Activated CD8-positive, alpha-beta T cell treated with anti-CD3 and anti-CD28 coated beads, Interleukin-2, amount 10 ng/mL, durations not matched to agents 7 days and 5 days (primary cell): ENCODE measurements at regions of chr6 and their contacts with region 1.

Region 1: DNA sequence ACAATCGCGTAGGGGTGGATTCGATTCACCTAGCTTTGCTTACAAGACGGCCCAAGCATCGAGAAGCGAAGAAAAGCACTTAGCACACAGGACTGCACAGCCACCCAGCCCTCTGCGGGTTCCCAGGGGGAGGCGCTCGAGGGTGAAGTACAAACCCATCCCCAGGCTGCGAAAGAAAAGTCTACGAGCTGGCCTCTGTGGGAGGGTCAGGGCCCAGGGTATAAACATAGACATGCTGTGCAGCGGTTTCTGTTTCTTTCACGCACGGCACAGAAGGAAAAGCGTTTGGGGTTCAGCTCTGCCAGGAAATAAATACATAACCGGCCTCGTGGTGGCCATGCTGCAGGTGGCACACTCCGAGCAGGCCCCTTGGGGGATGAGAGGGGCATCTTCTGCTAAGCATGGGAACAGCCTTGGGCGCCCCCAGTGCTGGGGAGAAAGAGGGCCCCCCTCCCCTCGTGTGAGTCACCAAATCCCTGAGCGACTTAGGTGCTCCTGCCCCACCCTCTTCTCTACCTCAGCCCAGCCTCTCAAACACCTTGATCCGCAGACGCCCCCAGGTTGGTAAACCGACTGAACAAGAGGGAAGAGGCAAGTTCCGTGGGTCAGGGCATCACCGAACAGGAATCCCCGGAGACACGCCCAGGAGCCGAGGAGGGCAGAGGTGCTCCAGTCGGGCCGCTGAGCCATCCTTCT is 91.6 kb upstream of the RIPOR2 start:
- DNase-seq: peak; percentile 88
- ATAC-seq: peak; percentile 97
- H3K4me3 Mint-ChIP-seq: peak overlapping the region; percentile 65
- H3K27ac Mint-ChIP-seq: peak overlapping the region; percentile 81
- H3K4me1 Mint-ChIP-seq: peaks cover 48% of the 10 kb centered on the region
- H3K27me3 Mint-ChIP-seq: no peaks in the 10 kb centered on the region

Region 2: GRCh38 chr6:24910961-24911712 is 116.2 kb before region 1 on chr6:
- CTCF ChIA-PET with region 1: interaction called, 16 read pairs
- POLR2A ChIA-PET with region 1: no interaction called
- DNase-seq: no peak
- ATAC-seq: peak; percentile 42
- H3K4me3 Mint-ChIP-seq: peak overlapping the region; percentile 81
- H3K27ac Mint-ChIP-seq: peak overlapping the region; percentile 87
- H3K4me1 Mint-ChIP-seq: peaks cover 94% of the 10 kb centered on the region
- H3K27me3 Mint-ChIP-seq: no peaks in the 10 kb centered on the region

Region 3: GRCh38 chr6:25006565-25007001 is 20.8 kb before region 1 on chr6:
- CTCF ChIA-PET with region 1: interaction called, 87 read pairs
- POLR2A ChIA-PET with region 1: interaction called, 3 read pairs
- DNase-seq: peak; percentile 76
- ATAC-seq: peak; percentile 84
- H3K4me3 Mint-ChIP-seq: peak overlapping the region; percentile 58
- H3K27ac Mint-ChIP-seq: peak overlapping the region; percentile 92
- H3K4me1 Mint-ChIP-seq: peaks cover 82% of the 10 kb centered on the region
- H3K27me3 Mint-ChIP-seq: no peaks in the 10 kb centered on the region

Region 4: GRCh38 chr6:25042036-25042521 is 14.7 kb after region 1 on chr6:
- CTCF ChIA-PET with region 1: interaction called, 113 read pairs
- POLR2A ChIA-PET with region 1: interaction called, 15 read pairs
- DNase-seq: peak; percentile 62
- ATAC-seq: peak; percentile 72
- H3K4me3 Mint-ChIP-seq: peak overlapping the region; percentile 92
- H3K27ac Mint-ChIP-seq: peak overlapping the region; percentile 94
- H3K4me1 Mint-ChIP-seq: peaks cover 60% of the 10 kb centered on the region
- H3K27me3 Mint-ChIP-seq: peaks cover 5% of the 10 kb centered on the region

Region 5: DNA sequence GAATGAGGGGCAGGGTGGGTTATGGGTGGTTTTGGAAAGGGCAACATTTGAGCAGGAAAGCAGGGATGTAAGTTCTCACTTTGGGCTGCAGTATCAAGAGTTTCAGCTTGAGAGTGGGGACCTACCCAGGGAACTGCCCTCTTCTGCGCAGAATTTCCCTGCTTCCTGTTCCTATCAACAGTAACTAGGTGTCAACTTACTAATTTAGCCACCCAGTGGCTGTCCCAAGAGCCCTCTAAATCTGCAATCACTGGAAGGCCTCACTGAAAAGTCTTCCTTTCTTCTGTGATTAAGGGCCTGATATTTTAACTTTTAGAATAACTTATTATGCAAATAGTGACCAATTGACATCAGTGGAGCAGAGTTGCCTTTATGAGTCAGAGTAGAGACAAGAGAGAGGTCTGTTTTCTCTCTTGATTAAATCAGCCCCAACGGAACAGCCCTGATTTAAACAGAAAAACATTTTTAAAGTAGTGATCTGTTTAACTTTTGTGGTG is 26.6 kb after region 1 on chr6:
- CTCF ChIA-PET with region 1: interaction called, 81 read pairs
- POLR2A ChIA-PET with region 1: interaction called, 3 read pairs
- DNase-seq: no peak
- ATAC-seq: no peak
- H3K4me3 Mint-ChIP-seq: no peak overlapping the region
- H3K27ac Mint-ChIP-seq: peak overlapping the region; percentile 44
- H3K4me1 Mint-ChIP-seq: peaks cover 89% of the 10 kb centered on the region
- H3K27me3 Mint-ChIP-seq: no peaks in the 10 kb centered on the region

Region 6: DNA sequence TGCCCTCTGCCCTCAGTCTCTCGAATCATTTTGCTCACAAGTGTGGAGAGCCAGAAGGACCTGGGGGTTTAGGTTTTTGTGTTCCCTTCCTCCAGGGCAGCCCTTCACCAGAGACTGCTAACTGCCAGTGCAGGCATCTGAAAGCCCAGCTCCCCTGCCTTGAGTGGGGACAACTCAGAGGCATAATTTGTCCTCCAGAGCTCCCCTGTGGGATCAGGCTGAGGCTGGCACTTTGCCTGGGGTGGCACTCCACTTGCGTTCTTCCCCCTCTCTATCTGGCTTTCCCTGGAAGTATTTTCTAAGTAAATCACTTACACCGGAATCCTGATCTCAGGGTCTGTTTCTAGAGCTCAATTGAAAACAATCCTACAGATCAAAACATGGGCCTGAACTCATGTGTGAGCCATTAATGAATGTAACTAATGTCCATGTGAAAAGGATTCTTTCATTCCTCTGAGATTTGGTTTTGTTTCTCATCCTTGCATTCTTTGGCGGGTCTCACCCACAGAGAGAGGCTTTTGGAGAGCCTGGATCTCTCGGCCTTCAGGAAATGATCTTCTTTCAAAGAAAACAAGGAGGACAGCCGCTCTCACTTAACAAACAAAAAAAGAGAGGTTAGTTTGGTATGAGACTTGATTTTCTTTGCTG is 34.0 kb after region 1 on chr6:
- CTCF ChIA-PET with region 1: interaction called, 53 read pairs
- POLR2A ChIA-PET with region 1: no interaction called
- DNase-seq: no peak
- ATAC-seq: no peak
- H3K4me3 Mint-ChIP-seq: no peak overlapping the region
- H3K27ac Mint-ChIP-seq: peak overlapping the region; percentile 9
- H3K4me1 Mint-ChIP-seq: peaks cover 41% of the 10 kb centered on the region
- H3K27me3 Mint-ChIP-seq: no peaks in the 10 kb centered on the region